SK-N-SH (cell line): ENCODE measurements at regions of chr2 and their contacts with region 1.

Region 1: DNA sequence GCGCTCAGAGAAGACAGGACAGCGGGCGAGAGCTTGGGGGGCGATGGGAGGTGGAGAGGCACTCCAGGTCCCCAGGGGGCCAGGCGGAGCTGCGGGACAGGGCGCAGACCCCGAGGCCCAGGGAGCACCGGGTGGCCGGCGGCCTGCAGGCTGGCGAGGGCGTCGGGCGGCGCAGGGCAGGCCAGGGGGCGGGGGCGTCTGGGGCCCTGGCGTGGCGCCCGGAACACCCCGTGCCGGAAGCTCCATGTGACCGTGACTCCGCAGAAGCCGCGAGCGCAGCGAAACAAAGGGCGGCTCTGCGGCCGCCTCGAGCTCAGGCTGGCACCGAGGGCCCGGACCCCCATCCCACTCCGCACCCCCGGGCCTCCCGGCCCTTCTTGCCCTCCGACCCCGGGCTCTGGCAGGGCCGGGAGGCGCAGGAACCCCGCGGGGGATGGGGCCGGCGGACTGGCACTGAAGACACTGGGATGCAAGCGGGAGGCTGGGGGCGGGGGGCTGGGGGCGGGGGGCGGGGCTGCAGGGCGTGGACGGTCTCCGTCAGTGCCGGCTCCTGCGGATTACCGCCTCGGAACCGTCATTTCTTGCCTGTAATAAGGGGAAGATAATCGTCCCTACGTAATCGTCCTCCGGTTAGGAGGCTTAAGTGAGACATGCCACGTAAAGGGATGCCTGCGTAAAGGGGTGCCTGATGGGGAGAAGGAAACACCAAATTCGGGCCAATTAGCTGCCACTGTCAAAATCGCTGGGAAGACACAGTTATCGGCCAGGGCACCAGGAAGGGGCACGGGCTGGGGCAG is 19.2 kb downstream of the SH2D6 start:
- DNase-seq: peak; percentile 97
- H3K4me3 ChIP-seq: peak overlapping the region in 1 of 2 experiments; percentile 42; a peak in 2 of 4 replicates
- H3K27ac ChIP-seq: peak overlapping the region; percentile 58 to 90
- H3K4me1 ChIP-seq: peaks cover 14 to 63% of the 10 kb centered on the region in 2 experiments; a peak in 3 of 4 replicates
- H3K27me3 ChIP-seq: no peaks in the 10 kb centered on the region
- CTCF ChIP-seq: no peak
- EP300 ChIP-seq: peak; percentile 19 to 51; a peak in 2 of 4 replicates
- RAD21 ChIP-seq: no peak

Region 2: DNA sequence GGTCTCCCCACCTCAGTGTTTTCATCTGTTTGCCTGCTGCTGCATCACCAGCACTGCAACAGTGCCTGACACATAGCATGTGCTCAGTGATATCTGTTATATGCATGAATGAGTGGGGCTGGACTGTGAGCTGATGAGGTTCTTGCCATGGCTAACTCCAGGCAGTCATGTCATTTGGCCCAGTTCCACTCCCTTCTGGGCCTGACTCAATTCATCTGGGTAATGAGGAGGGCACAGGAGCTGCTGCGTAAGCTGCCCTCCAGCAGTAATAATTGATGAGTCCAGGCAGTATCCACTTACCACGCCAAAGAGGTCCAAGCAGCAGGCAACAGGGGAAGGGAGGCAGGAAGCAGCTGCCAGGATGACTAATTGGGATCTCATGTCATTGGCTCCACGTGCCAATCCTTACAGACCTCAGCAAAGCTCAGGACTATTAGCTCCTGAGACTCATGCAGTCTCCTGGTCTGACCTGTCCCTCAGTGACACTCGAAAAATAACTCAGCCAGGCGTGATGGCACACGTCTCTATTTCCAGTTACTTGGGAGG is 67.2 kb after region 1 on chr2:
- CTCF ChIA-PET with region 1: interaction called, 3 read pairs
- POLR2A ChIA-PET with region 1: interaction called, 19 read pairs
- DNase-seq: peak; percentile 71
- H3K4me3 ChIP-seq: no peak overlapping the region
- H3K27ac ChIP-seq: peak overlapping the region; percentile 60 to 68
- H3K4me1 ChIP-seq: peaks cover 19 to 25% of the 10 kb centered on the region in 2 experiments; a peak in 3 of 4 replicates
- H3K27me3 ChIP-seq: no peaks in the 10 kb centered on the region
- CTCF ChIP-seq: no peak
- EP300 ChIP-seq: peak; percentile 56 to 90; a peak in 3 of 4 replicates
- RAD21 ChIP-seq: peak; percentile 3; the same call in 1 of the 2 replicates